Mammary epithelial cell (primary cell): ENCODE measurements at regions of chr10 and their contacts with region 1.

Region 1: GRCh38 chr10:99312501-99312900 is 16.7 kb upstream of the CNNM1 start:
- DNase-seq: no peak
- H3K4me3 ChIP-seq: no peak overlapping the region
- H3K27ac ChIP-seq: no peak overlapping the region
- H3K4me1 ChIP-seq: no peaks in the 10 kb centered on the region
- H3K27me3 ChIP-seq: no peaks in the 10 kb centered on the region
- CTCF ChIP-seq: no peak

Region 2: GRCh38 chr10:99234041-99234790 is 78.3 kb before region 1 on chr10:
- CTCF ChIA-PET with region 1: no interaction called
- dilution Hi-C with region 1: loop called (anchors 5 kb)
- in situ Hi-C with region 1: no loop called
- intact Hi-C with region 1: no loop called
- DNase-seq: peak; percentile 18
- H3K4me3 ChIP-seq: peak overlapping the region; percentile 20 to 41 (median 36)
- H3K27ac ChIP-seq: no peak overlapping the region
- H3K4me1 ChIP-seq: no peaks in the 10 kb centered on the region
- H3K27me3 ChIP-seq: peaks cover 57% of the 10 kb centered on the region
- CTCF ChIP-seq: no peak

Region 3: DNA sequence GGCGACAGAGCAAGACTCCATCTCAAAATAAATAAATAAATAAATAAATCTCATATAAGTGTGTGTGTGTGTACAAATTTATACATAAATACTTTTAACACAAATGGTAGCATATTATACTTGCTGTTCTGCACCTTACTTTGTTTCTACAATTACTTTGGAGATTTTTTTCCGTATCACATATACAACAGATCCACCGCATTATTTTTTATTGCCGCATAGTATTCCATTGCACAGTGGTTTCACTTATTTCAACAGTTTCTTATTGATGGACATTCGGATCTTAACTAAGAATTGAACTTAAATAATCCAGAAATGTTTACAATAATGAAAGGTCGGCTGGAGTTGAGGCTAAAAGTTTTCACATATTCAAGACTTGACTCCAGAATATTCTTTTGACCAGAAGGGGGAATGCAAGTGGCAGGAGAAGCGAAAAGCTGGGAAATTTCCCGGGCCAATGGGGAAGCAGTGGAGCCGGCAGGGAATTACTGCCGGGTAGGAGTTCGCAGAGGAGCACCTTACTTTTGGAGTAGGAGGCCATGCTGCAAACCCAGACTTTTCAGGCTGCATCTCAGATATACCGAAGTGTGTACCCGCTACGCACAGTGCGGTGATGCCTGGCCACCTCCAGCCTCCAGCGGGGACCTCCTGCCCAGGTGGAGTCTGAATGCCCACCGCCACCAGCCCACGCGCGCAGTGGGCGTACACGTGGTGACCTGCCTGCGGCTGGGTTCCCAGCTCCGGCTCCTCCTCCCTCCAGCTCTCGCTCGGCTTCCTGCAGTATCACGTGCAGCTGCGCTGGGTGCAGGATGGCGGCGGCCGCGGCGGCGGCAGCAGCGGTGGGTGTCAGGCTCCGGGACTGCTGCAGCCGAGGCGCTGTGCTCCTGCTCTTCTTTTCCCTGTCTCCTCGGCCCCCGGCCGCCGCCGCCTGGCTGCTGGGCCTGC is 16.4 kb after region 1 on chr10 and contains the start of gene CNNM1:
- CTCF ChIA-PET with region 1: no interaction called
- dilution Hi-C with region 1: no loop called
- in situ Hi-C with region 1: no loop called
- intact Hi-C with region 1: no loop called
- DNase-seq: peak; percentile 23
- H3K4me3 ChIP-seq: peak within 1 kb of the TSS; percentile 44 to 57 (median 47)
- H3K27ac ChIP-seq: no peak within 1 kb of the TSS
- H3K4me1 ChIP-seq: peaks cover 16% of the 10 kb centered on the region
- H3K27me3 ChIP-seq: peaks cover 7% of the 10 kb centered on the region
- CTCF ChIP-seq: no peak
- total RNA-seq, gene CNNM1: 0.52 to 2.0 TPM